ENCODE measurements at regions of chr4 and their contacts with region 1.

Region 1: GRCh38 chr4:118772081-118772766 is 63.7 kb downstream of the SEC24D start:
- DNase-seq: no peak
- ATAC-seq: peak; percentile 86
- H3K4me3 ChIP-seq: peak overlapping the region; percentile 14 to 48
- H3K27ac ChIP-seq: peak overlapping the region; percentile 43 to 79
- H3K4me1 ChIP-seq: peaks cover 5 to 9% of the 10 kb centered on the region in 2 donors
- H3K27me3 ChIP-seq: no peaks in the 10 kb centered on the region

Region 2: DNA sequence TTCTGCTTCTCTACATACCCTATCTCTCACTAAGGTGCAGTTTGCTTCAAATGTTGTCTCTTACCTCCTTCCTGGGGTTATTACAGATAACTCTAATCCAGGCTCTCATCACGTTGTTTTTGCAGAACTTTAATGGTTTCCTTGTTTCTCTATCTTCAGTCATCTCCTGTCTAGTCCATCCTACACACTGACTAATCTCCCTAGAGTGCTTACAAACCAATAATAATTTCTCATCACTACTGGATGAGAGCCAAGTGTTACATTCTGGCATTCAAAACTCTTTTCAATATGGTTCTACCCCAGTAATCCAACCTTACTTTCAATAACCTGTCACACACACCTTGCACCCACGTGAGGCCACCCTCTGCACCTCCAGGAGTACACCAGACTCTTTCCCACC is 202.5 kb after region 1 on chr4:
- intact Hi-C with region 1: loop called (anchors 5 kb)
- DNase-seq: no peak
- ATAC-seq: no peak
- H3K4me3 ChIP-seq: no peak overlapping the region
- H3K27ac ChIP-seq: peak overlapping the region; percentile 21 to 63
- H3K4me1 ChIP-seq: peaks cover 8 to 13% of the 10 kb centered on the region in 2 donors
- H3K27me3 ChIP-seq: no peaks in the 10 kb centered on the region